Activated B cell treated with CpG ODN at 0.5 μM for 24 hours (primary cell): ENCODE measurements at regions of chr12 and their contacts with region 1.

Region 1: DNA sequence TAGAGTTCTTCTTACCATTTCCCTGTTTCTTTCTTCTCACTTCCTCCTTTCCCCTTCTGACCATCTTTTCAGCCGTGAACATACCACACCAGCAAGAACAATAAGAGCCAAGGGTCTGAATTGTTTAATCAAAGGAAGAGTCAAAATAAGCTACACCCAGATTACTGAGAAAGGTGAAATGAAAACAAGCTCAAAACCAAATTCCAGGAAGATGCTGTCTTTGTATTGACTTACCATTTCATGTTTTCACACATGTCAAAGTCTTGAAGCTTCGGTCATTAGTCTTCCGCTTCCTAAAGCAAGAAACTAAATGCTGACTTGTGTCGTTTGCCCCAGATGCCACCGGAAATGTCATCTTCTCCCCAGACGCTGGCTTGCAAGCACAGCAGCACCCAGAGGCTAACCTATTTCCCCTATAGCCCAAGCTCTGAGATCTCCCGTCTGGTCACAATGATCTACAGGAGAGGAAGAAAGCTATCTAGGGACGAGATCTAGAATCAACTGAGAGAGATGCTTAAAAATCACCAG is 136.5 kb upstream of the AMIGO2 start:
- DNase-seq: peak; percentile 42
- ATAC-seq: peak; percentile 80
- H3K4me3 Mint-ChIP-seq: peak overlapping the region; percentile 88
- H3K27ac Mint-ChIP-seq: peak overlapping the region; percentile 96
- H3K4me1 Mint-ChIP-seq: peaks cover 77% of the 10 kb centered on the region
- H3K27me3 Mint-ChIP-seq: no peaks in the 10 kb centered on the region
- CTCF ChIP-seq: no peak

Region 2: GRCh38 chr12:46382964-46383653 is 833.1 kb before region 1 on chr12:
- CTCF ChIA-PET with region 1: no interaction called
- POLR2A ChIA-PET with region 1: no interaction called
- intact Hi-C with region 1: loop called (anchors 5 kb)
- DNase-seq: peak; percentile 92
- ATAC-seq: peak; percentile 69
- H3K4me3 Mint-ChIP-seq: peak overlapping the region; percentile 91
- H3K27ac Mint-ChIP-seq: peak overlapping the region; percentile 94
- H3K4me1 Mint-ChIP-seq: peaks cover 46% of the 10 kb centered on the region
- H3K27me3 Mint-ChIP-seq: no peaks in the 10 kb centered on the region
- CTCF ChIP-seq: no peak

Region 3: DNA sequence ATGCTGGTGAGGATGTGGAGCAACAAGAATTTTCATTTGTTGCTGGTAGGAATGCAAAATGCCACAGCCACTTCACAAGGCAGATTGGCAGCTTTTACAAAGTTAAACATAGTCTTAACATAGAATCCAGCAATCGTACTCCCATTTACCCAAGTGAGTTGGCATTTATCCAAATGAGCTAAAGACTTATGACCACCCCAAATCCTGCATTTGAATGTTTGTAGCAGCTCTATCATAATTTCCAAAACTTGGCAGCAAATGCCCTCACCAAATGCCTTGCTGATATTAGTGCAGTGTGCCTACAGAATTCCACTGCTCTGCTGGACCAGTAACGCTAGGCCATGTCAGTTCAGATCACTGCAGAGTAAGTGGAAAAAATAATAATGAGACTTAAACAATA is 15.8 kb before region 1 on chr12:
- CTCF ChIA-PET with region 1: interaction called, 3 read pairs
- POLR2A ChIA-PET with region 1: interaction called, 8 read pairs
- intact Hi-C with region 1: loop called (anchors 2 kb)
- DNase-seq: no peak
- ATAC-seq: no peak
- H3K4me3 Mint-ChIP-seq: no peak overlapping the region
- H3K27ac Mint-ChIP-seq: peak overlapping the region; percentile 46
- H3K4me1 Mint-ChIP-seq: peaks cover 57% of the 10 kb centered on the region
- H3K27me3 Mint-ChIP-seq: no peaks in the 10 kb centered on the region
- CTCF ChIP-seq: no peak

Region 4: DNA sequence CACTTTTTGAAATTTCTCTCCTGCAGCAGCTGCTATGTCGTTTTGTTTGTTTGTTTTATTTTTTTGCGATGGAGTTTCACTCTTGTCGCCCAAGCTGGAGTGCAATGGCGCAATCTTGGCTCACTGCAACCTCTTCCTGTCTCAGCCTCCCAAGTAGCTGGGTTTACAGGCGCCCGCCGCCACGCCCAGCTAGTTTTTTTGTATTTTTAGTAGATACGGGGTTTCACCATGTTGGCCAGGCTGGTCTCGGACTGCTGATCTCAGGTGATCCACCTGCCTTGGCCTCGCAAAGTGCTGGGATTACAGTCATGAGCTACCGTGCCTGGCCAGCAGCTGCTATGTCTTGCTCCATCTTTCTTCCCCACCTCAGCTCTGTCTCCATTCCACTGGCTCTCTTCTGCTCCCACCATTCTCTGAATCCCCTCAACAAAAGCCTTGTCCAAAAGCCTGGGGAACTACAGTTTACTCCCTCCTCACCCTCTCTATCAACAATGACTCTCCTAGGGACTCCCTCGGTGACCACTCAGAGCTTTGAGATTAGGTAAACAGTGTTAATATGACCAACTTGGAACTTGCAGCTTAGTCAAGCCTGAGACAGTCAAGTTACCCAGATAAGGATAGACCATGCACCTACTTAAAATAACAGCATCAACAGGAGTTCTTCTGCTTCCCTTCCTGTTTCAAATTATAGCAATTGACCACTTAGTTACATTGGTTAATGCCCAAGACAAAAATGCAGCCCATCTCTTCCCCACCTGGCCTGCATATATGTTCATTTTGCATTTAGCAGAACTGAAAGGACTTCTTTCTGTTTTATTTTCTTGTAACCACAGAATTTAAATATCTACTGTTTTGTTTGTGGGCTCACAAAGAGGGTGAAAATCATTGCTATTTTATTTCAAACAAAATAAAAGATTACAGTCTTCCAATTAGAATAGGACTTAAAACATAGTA is 52.6 kb after region 1 on chr12:
- CTCF ChIA-PET with region 1: interaction called, 3 read pairs
- POLR2A ChIA-PET with region 1: interaction called, 8 read pairs
- intact Hi-C with region 1: loop called (anchors 2 kb)
- DNase-seq: no peak
- ATAC-seq: peak; percentile 73
- H3K4me3 Mint-ChIP-seq: peak overlapping the region; percentile 62
- H3K27ac Mint-ChIP-seq: peak overlapping the region; percentile 96
- H3K4me1 Mint-ChIP-seq: peaks cover 59% of the 10 kb centered on the region
- H3K27me3 Mint-ChIP-seq: no peaks in the 10 kb centered on the region
- CTCF ChIP-seq: no peak

Region 5: GRCh38 chr12:47276621-47277309 is 60.6 kb after region 1 on chr12:
- CTCF ChIA-PET with region 1: no interaction called
- POLR2A ChIA-PET with region 1: interaction called, 9 read pairs
- intact Hi-C with region 1: loop called (anchors 2 kb)
- DNase-seq: no peak
- ATAC-seq: peak; percentile 86
- H3K4me3 Mint-ChIP-seq: peak overlapping the region; percentile 46
- H3K27ac Mint-ChIP-seq: peak overlapping the region; percentile 85
- H3K4me1 Mint-ChIP-seq: peaks cover 62% of the 10 kb centered on the region
- H3K27me3 Mint-ChIP-seq: no peaks in the 10 kb centered on the region
- CTCF ChIP-seq: no peak

Region 6: GRCh38 chr12:47356129-47356700 is 140.0 kb after region 1 on chr12:
- CTCF ChIA-PET with region 1: interaction called, 3 read pairs
- POLR2A ChIA-PET with region 1: interaction called, 22 read pairs
- intact Hi-C with region 1: loop called (anchors 1 kb)
- DNase-seq: no peak
- ATAC-seq: peak; percentile 77
- H3K4me3 Mint-ChIP-seq: peak overlapping the region; percentile 51
- H3K27ac Mint-ChIP-seq: peak overlapping the region; percentile 97
- H3K4me1 Mint-ChIP-seq: peaks cover 85% of the 10 kb centered on the region
- H3K27me3 Mint-ChIP-seq: no peaks in the 10 kb centered on the region
- CTCF ChIP-seq: no peak